ENCODE measurements at regions of chr15 and their contacts with region 1.

Region 1: GRCh38 chr15:86506401-86506800 is 426.7 kb downstream of the AGBL1 start:
- DNase-seq: no peak
- H3K4me3 ChIP-seq: no peak overlapping the region
- H3K4me3 Mint-ChIP-seq: no peak overlapping the region
- H3K27ac Mint-ChIP-seq: no peak overlapping the region
- H3K4me1 ChIP-seq: no peaks in the 10 kb centered on the region
- H3K4me1 Mint-ChIP-seq: no peaks in the 10 kb centered on the region
- H3K27me3 ChIP-seq: no peaks in the 10 kb centered on the region
- H3K27me3 Mint-ChIP-seq: no peaks in the 10 kb centered on the region
- CTCF ChIP-seq: no peak

Region 2: DNA sequence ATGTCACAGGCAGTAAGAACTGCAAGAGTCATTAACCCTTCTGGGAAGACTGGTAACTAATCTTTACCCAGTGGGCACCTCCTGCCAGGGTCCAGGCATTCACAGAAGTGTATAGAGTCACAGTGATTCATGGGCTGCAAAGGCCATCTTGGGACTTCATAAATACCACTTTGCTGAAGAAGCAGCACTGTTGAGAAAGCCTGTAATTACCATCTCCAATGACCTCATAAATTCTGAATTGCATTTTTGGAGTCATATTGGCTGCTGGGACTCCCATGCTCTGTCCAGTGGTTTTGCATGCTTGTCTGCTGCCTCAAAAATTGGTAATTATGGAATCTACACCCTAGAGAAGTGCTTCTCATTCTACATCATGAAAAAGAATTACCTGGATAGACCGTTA is 912.9 kb after region 1 on chr15:
- CTCF ChIA-PET with region 1: no interaction called
- POLR2A ChIA-PET with region 1: no interaction called
- intact Hi-C with region 1: loop called (anchors 5 kb)
- DNase-seq: no peak
- H3K4me3 ChIP-seq: no peak overlapping the region
- H3K4me3 Mint-ChIP-seq: no peak overlapping the region
- H3K27ac Mint-ChIP-seq: no peak overlapping the region
- H3K4me1 ChIP-seq: no peaks in the 10 kb centered on the region
- H3K4me1 Mint-ChIP-seq: no peaks in the 10 kb centered on the region
- H3K27me3 ChIP-seq: no peaks in the 10 kb centered on the region
- H3K27me3 Mint-ChIP-seq: peaks cover 3% of the 10 kb centered on the region
- CTCF ChIP-seq: no peak

Measured in Caco-2 (cell line).